Dorsolateral prefrontal cortex (tissue), 120 donors: ENCODE measurements at regions of chr6 and their contacts with region 1.

Region 1: DNA sequence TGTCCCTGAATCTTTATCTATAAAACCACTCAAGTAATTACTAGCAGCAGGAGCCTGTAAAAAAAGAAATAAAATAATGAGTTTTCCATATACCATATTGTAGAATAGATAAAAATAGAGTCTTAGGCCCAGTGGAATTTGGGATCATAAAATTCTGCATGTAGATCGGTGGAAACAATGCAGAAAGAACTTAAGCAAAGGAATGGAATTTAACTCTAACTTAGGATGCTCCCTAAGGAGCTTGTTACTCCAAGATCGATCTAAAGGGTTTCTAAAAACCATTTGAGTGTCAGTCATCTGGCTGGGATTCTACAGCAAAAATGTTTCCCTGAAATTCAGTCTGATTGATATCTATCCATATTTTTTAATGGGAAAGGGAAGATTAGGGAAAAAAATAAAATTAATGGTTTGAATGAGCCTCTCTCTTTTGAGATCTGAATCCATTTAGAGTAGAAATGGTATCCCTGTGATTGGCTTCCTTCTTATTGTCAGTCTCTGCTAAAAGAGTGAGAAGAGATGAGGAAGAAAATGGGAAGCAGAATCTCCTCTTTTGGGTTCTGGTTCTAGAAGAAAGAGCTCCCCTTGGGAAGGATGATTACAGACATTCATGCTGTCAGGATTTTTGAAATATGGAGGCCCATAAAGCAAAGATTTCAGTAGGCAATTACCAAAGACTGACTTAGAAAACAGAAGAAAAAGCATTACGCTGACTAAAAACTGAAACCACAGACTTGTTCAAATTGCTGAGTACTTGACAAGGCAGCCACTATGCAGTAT is 564.3 kb upstream of the MARCKS start:
- DNase-seq: no peak
- H3K4me3 ChIP-seq: peak overlapping the region in 15 of 59 donors; percentile 1 to 56 (median 27)
- H3K27ac ChIP-seq: peak overlapping the region in 1 of 59 donors; percentile 10
- H3K27me3 ChIP-seq: no peaks in the 10 kb centered on the region
- CTCF ChIP-seq: no peak

Region 2: DNA sequence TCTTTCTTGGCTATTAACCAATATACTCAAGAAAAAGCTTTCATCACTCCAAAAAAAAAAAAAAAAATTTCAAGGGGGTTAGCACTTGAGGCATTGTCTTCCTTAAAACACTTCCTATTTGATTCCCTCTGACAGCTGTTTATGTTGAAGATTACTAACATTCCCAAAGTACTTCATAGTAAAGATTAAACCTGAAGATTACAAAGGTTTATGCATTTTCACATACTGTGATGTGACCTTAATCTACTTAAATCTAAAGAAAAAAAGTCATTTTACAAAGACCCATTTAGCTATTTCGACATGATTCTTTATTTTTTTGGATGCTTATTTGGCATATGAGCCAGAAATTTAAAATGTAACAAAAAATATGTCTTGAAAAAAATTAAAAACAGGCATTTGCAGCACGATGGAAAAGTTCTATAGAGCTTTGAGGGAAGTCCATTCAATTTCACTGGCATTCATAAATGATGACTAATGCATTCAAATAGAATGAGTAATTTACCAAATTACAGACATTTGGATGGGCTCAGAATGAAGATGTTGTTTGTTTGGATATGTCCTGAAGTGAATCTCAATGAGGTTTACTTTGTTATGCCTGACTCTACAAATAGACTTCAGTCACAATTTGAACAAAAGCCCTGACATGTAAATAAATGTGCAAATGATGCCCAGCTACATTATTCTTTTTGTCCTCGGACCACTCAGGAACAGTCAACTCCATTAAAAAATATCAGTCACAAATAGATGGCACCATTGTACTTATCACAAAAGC is 110.3 kb before region 1 on chr6:
- intact Hi-C with region 1: loop called in 1 of 2 experiments (anchors 10 kb)
- DNase-seq: no peak
- H3K4me3 ChIP-seq: peak overlapping the region in 3 of 59 donors; percentile 2 to 4 (median 3)
- H3K27ac ChIP-seq: no peak overlapping the region
- H3K27me3 ChIP-seq: no peaks in the 10 kb centered on the region
- CTCF ChIP-seq: peak in 21 of 56 donors; percentile 7 to 49 (median 24)

Region 3: GRCh38 chr6:113306552-113307145 is 13.8 kb after region 1 on chr6:
- intact Hi-C with region 1: no loop called
- DNase-seq: peak in 3 of 10 donors; percentile 34 to 65 (median 57)
- H3K4me3 ChIP-seq: no peak overlapping the region
- H3K27ac ChIP-seq: no peak overlapping the region
- H3K27me3 ChIP-seq: no peaks in the 10 kb centered on the region
- CTCF ChIP-seq: peak in 47 of 56 donors; percentile 17 to 75 (median 50)

Region 4: DNA sequence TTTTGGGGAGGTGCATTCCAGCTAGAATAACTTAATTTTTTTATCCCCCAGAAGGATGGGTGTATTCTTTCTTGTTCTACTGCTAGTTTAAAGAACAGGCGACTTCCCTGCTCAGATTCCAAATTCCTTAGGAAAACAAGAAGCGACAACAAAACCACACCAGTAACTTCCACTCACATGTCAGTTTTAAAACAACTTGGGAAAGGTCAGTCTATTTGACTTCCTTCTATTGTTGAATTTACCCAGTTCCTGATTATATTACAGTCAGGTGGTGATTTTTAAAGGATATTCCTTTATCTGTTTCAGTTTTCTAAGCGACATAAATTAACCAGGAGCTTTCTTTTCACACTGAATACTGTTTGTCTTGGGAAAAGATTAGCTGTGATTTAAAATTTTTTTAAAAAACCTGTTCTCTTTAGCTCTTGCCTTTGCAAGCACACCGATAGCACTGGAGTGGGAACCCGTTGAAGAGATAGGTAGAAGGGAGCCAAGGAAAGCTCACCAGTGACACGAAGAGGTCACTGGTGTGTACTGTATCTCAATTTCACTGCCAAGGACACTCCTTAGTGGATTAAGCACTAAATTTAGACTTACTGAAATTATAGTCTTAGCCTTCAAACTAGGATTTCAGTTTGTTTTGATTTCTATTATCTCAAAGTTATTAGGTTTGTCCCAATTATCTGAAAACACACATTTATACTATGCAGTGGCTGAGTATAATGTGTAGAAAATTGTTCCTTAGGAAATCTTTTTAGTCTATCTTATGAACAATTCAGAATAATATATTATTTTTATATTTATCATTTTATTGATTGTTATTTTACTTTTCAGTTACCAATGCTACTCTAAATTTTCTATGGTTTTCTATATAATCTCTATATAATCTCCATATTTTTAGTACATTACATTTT is 586.6 kb after region 1 on chr6:
- intact Hi-C with region 1: loop called in 1 of 2 experiments (anchors 10 kb)
- DNase-seq: peak in 1 of 10 donors; percentile 54
- H3K4me3 ChIP-seq: peak overlapping the region in 24 of 59 donors; percentile 2 to 42 (median 20)
- H3K27ac ChIP-seq: peak overlapping the region in 2 of 59 donors; percentile 2 to 10
- H3K27me3 ChIP-seq: no peaks in the 10 kb centered on the region
- CTCF ChIP-seq: peak; percentile 25 to 78 (median 61)